ENCODE measurements at regions of chr1 and their contacts with region 1.

Region 1: DNA sequence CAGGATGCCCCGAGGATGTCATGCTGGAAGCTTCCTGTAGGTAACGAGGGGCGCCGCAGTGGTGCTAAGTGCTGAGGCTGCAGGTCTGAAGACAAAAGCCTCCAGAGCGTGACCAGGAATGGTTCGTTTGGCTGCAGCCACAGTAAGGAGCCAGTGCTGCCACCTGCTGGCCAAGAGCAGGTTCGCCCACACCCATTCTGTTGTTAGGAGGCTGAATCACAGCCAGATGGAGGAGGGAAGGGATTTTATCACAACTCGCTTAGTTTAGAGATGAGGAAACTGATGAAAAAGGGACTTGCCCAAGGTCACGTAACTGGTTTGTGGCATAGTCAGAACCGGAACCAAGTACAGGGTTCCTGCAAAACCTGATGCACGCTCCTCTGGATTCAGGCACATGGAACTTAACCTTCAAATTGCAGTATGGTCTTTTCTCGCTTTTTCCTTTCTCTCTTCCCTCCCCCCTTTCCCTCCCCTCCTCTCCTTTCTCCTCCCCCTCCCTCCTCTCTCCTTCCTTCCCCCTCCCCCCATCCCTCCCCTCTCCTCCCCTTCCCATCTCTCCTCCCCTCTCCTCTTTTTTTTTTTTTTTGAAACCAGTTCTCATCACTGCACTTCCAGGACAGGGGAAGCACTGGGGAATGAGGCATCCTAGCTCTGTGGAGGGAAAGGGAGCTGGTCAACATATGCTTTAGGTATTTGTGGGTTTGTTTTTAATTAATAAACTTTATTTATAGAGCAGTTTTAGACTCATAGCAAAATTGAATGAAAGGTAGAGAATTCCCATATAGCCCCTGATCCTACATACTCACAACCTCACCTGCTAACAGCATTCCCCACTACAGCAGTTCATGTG is 81.8 kb downstream of the MPZL1 start:
- DNase-seq: peak; percentile 98
- H3K4me3 Mint-ChIP-seq: peak overlapping the region; percentile 50
- H3K27ac Mint-ChIP-seq: peak overlapping the region; percentile 80
- H3K4me1 Mint-ChIP-seq: peaks cover 24% of the 10 kb centered on the region
- H3K27me3 Mint-ChIP-seq: no peaks in the 10 kb centered on the region

Region 2: DNA sequence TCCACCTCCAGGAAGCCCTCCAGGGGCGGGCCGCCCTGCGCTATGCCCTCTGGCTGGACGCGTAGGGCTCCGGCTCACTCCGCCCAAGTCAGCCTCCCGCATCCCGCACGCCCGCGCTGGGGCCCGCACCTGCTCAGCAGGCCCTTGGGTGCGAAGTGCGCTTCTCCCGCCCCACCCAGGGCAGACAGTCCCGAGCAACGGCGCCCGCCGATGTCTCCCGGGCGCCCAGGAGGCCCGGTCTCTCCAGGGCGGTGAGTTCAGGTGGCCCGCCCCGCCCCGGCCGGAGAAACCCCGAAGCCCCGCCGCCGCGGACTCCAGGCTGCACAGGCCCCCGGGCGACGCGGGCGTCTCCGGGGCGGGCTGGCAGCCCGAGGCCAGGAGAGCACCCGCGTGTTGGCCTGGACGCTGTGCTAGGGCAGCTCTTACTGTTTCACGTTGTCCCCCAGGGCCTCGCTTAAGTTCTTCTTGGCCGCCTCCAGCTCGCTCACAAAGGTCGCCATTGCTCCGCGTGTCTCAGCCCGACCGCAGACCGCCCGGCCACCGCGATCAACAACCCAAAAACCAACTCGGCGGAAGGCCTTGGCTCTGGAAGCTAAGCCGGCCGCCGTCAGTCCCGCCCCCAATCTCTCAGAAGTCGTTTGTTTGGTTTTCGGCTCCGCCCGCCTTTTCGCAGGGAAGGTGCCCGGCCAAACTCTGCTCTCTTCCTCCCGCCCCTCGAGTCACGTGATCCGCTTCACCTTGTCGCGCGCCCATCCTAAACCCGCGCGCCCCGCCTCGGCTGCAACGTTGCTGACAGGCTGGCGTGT is 927.6 kb before region 1 on chr1 and contains the start of gene TADA1:
- CTCF ChIA-PET with region 1: no interaction called
- intact Hi-C with region 1: loop called (anchors 10 kb)
- DNase-seq: peak; percentile 100
- H3K4me3 Mint-ChIP-seq: peak within 1 kb of the TSS; percentile 99
- H3K27ac Mint-ChIP-seq: peak within 1 kb of the TSS; percentile 97
- H3K4me1 Mint-ChIP-seq: peaks cover 37% of the 10 kb centered on the region
- H3K27me3 Mint-ChIP-seq: no peaks in the 10 kb centered on the region
- total RNA-seq, gene TADA1: 19.6 to 19.9 TPM

Region 3: DNA sequence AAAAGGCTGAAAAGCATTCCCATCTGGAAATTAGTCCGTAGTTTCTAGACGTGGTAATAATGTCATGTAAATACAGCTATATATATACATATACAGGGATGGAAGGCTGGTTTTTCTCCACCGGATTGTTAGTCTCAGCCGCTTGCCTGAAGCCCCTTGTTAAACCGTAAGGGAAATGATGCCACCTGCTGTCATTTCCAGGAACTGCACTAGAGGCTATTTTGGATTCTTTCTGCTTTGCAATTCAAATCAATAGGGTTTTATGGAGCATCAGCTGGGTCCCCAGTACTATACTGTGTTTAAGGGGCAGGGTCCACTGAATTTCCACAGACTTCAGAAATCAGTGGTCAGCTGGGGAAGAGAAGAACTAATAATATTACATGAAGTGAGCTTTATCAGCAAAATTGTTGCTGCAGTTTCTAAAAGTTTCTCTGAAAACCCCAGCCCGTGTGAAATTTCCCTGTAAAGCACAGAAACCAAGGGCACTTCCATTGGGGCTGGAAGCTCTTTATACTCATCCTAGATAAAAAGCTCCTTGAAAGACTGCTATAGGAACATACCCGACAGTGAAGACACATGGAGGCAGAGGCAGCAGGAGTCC is 115.6 kb before region 1 on chr1:
- CTCF ChIA-PET with region 1: interaction called, 3 read pairs
- intact Hi-C with region 1: loop called (anchors 1 kb)
- DNase-seq: peak; percentile 94
- H3K4me3 Mint-ChIP-seq: no peak overlapping the region
- H3K27ac Mint-ChIP-seq: peak overlapping the region; percentile 62
- H3K4me1 Mint-ChIP-seq: peaks cover 11% of the 10 kb centered on the region
- H3K27me3 Mint-ChIP-seq: no peaks in the 10 kb centered on the region

Region 4: GRCh38 chr1:167721617-167722151 is 81.9 kb before region 1 on chr1 and contains the start of gene MPZL1:
- CTCF ChIA-PET with region 1: interaction called, 12 read pairs
- intact Hi-C with region 1: loop called (anchors 1 kb)
- DNase-seq: peak; percentile 94
- H3K4me3 Mint-ChIP-seq: peak within 1 kb of the TSS; percentile 89
- H3K27ac Mint-ChIP-seq: peak within 1 kb of the TSS; percentile 65
- H3K4me1 Mint-ChIP-seq: peaks cover 57% of the 10 kb centered on the region
- H3K27me3 Mint-ChIP-seq: no peaks in the 10 kb centered on the region
- total RNA-seq, gene MPZL1: 24.2 to 28.1 TPM

Region 5: GRCh38 chr1:167763525-167764220 is 39.9 kb before region 1 on chr1:
- CTCF ChIA-PET with region 1: interaction called, 4 read pairs
- intact Hi-C with region 1: loop called (anchors 1 kb)
- DNase-seq: no peak
- H3K4me3 Mint-ChIP-seq: no peak overlapping the region
- H3K27ac Mint-ChIP-seq: no peak overlapping the region
- H3K4me1 Mint-ChIP-seq: peaks cover 20% of the 10 kb centered on the region
- H3K27me3 Mint-ChIP-seq: no peaks in the 10 kb centered on the region

Region 6: DNA sequence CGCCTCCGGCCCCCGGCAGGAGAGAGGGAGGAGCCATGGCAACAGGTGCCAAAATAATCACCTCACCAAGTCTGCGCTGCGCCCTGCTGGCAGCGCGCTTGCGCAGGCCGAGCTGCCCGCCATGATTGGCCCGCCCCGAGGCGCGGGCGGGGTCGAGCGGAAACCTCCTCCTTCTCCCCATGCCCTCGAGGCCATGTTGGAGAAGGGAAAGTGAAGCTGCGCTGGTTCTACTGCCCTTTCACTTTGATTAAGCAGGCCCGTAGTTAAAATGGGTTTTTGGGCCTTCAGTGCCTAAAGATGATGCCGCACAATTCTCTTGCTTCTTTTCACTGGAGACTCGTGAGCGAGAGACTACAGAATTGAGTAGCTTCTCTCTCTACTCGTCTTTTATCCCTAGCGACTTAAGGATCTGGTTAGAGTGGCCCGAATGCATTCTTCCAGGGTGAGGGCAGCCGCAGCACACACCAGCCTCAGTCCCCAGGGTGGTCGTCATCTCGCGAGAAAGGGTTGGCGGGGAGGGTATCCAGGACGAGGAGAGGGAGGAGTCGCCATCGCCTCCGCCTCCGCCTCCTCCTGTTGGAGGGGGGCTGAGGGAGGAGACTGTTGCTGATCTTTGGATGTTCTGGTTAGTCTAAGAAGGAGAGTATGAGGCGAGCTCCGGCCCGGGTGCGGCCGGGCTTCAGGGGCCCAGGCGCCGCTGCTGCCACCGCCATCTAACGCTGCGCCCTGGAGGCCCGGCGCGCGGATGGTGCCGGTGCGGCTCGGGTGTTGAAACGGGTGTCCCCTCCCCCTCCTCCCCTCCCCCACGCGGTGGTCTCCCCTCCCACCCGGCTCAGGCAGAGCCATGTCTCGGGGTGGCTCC is 132.7 kb after region 1 on chr1 and contains the start of gene DCAF6:
- CTCF ChIA-PET with region 1: interaction called, 3 read pairs
- intact Hi-C with region 1: loop called (anchors 1 kb)
- DNase-seq: peak; percentile 97
- H3K4me3 Mint-ChIP-seq: peak within 1 kb of the TSS; percentile 85
- H3K27ac Mint-ChIP-seq: peak within 1 kb of the TSS; percentile 100
- H3K4me1 Mint-ChIP-seq: peaks cover 32% of the 10 kb centered on the region
- H3K27me3 Mint-ChIP-seq: no peaks in the 10 kb centered on the region
- total RNA-seq, gene DCAF6: 15.4 to 15.9 TPM

Region 7: GRCh38 chr1:168178638-168179437 is 375.3 kb after region 1 on chr1 and contains the start of gene TIPRL:
- CTCF ChIA-PET with region 1: no interaction called
- intact Hi-C with region 1: loop called (anchors 1 kb)
- DNase-seq: peak; percentile 97
- H3K4me3 Mint-ChIP-seq: no peak within 1 kb of the TSS
- H3K27ac Mint-ChIP-seq: no peak within 1 kb of the TSS
- H3K4me1 Mint-ChIP-seq: peaks cover 7% of the 10 kb centered on the region
- H3K27me3 Mint-ChIP-seq: peaks cover 2% of the 10 kb centered on the region
- total RNA-seq, gene TIPRL: 76.7 to 81.3 TPM